Head of caudate nucleus (tissue), 42 donors: ENCODE measurements at regions of chr9 and their contacts with region 1.

Region 1: GRCh38 chr9:78213712-78214111 is 22.2 kb upstream of the CEP78 start:
- DNase-seq: peak in 12 of 42 donors; percentile 11 to 71 (median 27)

Region 2: DNA sequence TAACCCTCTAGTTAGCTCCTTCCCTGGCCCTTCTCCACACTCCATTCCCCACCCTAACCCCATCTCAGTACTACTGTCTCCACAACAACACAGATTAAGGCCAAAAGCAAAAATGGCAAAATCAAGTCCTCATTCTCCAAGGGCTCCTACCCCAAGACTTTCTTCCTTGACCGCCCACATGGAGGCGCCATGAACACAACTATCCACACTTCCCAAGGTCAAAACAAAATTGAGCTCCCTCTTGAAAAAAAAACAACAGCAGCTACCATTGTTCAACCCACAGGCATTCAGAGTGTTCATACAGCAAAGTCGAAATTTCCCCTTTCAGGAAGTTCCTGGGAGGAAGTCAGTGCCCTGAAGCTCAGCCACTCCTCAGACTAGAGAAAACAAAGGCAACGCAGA is 236.5 kb before region 1 on chr9:
- intact Hi-C with region 1: loop called (anchors 10 kb)
- DNase-seq: peak in 41 of 42 donors; percentile 33 to 89 (median 71)

Region 3: DNA sequence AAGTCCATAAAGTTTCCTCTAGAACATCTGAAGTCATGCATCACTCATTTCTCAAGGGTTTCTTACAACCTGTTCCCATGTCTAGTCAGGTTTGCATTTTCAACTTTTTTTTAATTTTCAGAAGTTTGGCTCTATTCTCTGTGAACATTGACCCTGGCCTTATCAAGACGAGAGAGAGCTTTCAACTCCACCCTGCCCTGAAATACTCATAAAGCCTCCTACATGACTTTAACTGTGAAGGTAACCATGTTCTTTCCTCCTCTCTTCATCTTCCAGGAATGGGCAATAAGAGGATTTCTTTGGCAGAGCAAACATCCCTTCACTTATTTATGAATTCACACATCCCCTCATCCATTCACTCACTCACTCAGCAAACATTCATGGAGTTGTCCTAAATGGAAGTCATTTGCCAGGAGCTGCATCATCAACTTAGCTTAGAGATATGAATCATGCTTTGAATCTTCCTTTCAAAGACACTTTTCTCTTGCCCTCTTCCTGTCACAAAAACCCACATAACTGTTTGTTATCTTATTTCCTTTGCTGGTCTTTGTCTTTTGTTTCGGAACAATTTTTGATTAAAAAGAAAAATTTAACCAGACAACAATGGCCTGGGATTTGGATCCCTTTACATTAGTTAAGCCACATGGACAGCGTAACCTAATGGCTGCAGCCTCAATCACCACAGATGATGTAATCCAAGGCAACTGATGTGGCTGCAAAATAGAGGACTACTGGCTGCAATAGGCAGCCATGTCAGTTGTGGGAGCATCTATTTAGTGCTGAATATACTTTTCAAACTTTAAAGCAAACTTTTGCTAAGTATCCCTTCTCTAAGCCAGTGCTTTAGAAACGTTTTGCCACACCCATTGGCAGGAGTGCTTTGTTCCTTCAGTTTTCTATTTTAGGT is 139.1 kb before region 1 on chr9:
- intact Hi-C with region 1: no loop called
- DNase-seq: no peak

Region 4: DNA sequence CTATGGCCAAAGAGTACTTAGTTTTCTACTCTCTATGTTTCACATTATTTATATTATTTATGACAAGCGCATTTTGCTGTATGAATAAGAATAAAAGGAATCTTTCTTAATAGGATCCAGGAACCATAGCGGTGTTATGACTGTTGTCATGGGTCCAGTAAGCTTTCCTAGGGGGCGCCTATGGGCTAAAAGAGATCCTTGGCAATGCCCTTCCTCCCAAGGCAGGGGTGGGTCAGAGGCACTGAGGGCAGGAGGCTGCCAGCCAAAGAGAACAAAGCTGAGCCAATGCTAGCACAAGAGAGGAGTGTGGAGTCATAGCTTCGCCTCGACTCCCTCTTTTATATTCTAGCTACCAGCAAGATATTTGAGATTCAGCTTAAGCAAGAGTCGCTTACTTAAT is 83.7 kb before region 1 on chr9:
- intact Hi-C with region 1: loop called (anchors 5 kb)
- DNase-seq: peak; percentile 66 to 96 (median 88)

Region 5: GRCh38 chr9:78332381-78332780 is 118.7 kb after region 1 on chr9:
- intact Hi-C with region 1: no loop called
- DNase-seq: no peak